Gastrocnemius medialis (tissue), 4 donors: ENCODE measurements at regions of chr3 and their contacts with region 1.

Region 1: DNA sequence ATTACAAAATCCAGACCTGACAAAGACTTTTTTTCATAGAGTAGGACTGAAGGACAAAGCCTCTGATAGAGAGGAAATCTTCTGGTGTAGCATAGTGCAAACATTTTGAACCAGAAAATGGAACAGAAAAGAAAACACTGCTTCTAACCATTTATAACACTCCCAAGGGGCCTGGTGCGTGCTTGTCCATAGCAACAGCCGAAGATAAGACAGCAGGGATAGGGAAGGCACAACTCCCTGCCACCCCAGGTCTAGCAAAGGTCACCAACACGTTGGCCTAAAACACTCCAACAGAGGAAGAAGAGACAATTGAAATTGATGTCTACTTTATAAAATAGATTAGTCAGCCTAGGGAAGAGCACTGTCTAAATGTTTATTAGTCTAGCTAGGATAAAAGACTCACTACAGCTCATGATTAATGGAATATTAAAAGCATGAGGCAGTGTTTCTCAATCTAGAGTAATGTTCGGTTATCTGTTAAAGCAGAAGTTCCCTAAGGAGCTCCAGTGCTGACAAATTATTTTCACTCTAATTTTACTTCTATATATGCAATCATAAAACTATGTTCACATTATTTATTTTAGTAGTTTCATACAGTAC is 145.2 kb downstream of the P3H2 start:
- DNase-seq: no peak
- ATAC-seq: no peak
- H3K4me3 ChIP-seq: no peak overlapping the region
- H3K27ac ChIP-seq: no peak overlapping the region
- H3K4me1 ChIP-seq: no peaks in the 10 kb centered on the region
- H3K27me3 ChIP-seq: no peaks in the 10 kb centered on the region
- CTCF ChIP-seq: no peak
- POLR2A ChIP-seq: no peak

Region 2: GRCh38 chr3:189786479-189787064 is 188.9 kb before region 1 on chr3:
- in situ Hi-C with region 1: no loop called
- intact Hi-C with region 1: no loop called
- DNase-seq: no peak
- ATAC-seq: no peak
- H3K4me3 ChIP-seq: no peak overlapping the region
- H3K27ac ChIP-seq: no peak overlapping the region
- H3K4me1 ChIP-seq: peaks cover 5 to 7% of the 10 kb centered on the region in 2 donors
- H3K27me3 ChIP-seq: no peaks in the 10 kb centered on the region
- CTCF ChIP-seq: peak in 1 of 5 experiments; percentile 28
- POLR2A ChIP-seq: no peak

Region 3: GRCh38 chr3:190003681-190004123 is 28.2 kb after region 1 on chr3:
- in situ Hi-C with region 1: no loop called
- intact Hi-C with region 1: no loop called
- DNase-seq: no peak
- ATAC-seq: peak in 1 of 2 donors; percentile 61
- H3K4me3 ChIP-seq: no peak overlapping the region
- H3K27ac ChIP-seq: no peak overlapping the region
- H3K4me1 ChIP-seq: peaks cover 0 to 14% of the 10 kb centered on the region in 2 donors
- H3K27me3 ChIP-seq: peaks cover 0 to 6% (median 0%) of the 10 kb centered on the region in 3 donors
- CTCF ChIP-seq: no peak
- POLR2A ChIP-seq: no peak

Region 4: GRCh38 chr3:190197346-190197763 is 221.9 kb after region 1 on chr3:
- in situ Hi-C with region 1: loop called in 1 of 4 experiments (anchors 10 kb)
- intact Hi-C with region 1: no loop called
- DNase-seq: no peak
- ATAC-seq: no peak
- H3K4me3 ChIP-seq: no peak overlapping the region
- H3K27ac ChIP-seq: no peak overlapping the region
- H3K4me1 ChIP-seq: no peaks in the 10 kb centered on the region
- H3K27me3 ChIP-seq: no peaks in the 10 kb centered on the region
- CTCF ChIP-seq: no peak
- POLR2A ChIP-seq: no peak